HepG2 (cell line): ENCODE measurements at regions of chrX and their contacts with region 1.

Region 1: DNA sequence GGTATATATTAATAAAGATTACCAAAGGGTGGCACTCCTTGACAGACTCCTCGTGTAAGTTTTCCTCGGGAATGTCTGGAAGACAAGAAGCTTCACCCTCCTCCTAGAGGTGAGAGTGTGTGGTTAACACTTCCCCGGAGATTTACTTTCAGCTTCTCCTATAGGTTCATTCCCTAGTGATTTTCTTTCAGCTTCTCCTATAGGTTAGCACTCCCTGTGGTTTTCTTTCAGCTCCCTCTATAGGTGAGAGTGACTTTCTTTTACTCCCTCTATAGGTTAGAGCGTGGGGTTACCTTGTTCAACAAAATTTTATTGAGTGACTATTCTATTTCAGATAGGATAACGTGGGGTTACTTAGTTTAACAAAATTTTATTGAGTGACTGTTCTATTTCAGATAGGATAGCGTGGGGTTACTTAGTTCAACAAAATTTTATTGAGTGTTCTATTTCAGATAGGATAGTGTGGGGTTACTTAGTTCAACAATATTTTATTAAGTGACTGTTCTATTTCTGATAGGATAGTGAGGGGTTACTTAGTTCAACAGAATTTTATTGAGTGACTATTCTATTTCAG is 106.0 kb upstream of the PLAC1 start:
- DNase-seq: peak; percentile 64
- ATAC-seq: peak; percentile 97
- H3K4me3 ChIP-seq: no peak overlapping the region
- H3K27ac ChIP-seq: no peak overlapping the region
- H3K4me1 ChIP-seq: no peaks in the 10 kb centered on the region; the same call in 1 of the 2 replicates
- H3K27me3 ChIP-seq: no peaks in the 10 kb centered on the region
- CTCF ChIP-seq: peak; percentile 29; the same call in 1 of the 2 replicates
- EP300 ChIP-seq: no peak
- POLR2A ChIP-seq: no peak
- RAD21 ChIP-seq: no peak

Region 2: GRCh38 chrX:134423615-134424014 is 340.7 kb before region 1 on chrX:
- CTCF ChIA-PET with region 1: no interaction called
- POLR2A ChIA-PET with region 1: no interaction called
- in situ Hi-C with region 1: no loop called
- intact Hi-C with region 1: loop called (anchors 10 kb)
- DNase-seq: peak; percentile 3
- ATAC-seq: no peak
- H3K4me3 ChIP-seq: no peak overlapping the region
- H3K27ac ChIP-seq: no peak overlapping the region
- H3K4me1 ChIP-seq: no peaks in the 10 kb centered on the region
- H3K27me3 ChIP-seq: no peaks in the 10 kb centered on the region
- CTCF ChIP-seq: peak; percentile 39; the same call in 1 of the 2 replicates
- EP300 ChIP-seq: no peak
- POLR2A ChIP-seq: no peak
- RAD21 ChIP-seq: no peak

Region 3: GRCh38 chrX:134484039-134484438 is 280.3 kb before region 1 on chrX:
- CTCF ChIA-PET with region 1: no interaction called
- POLR2A ChIA-PET with region 1: no interaction called
- in situ Hi-C with region 1: loop called (anchors 10 kb)
- intact Hi-C with region 1: no loop called
- DNase-seq: peak; percentile 15
- ATAC-seq: no peak
- H3K4me3 ChIP-seq: no peak overlapping the region
- H3K27ac ChIP-seq: no peak overlapping the region
- H3K4me1 ChIP-seq: no peaks in the 10 kb centered on the region
- H3K27me3 ChIP-seq: no peaks in the 10 kb centered on the region
- CTCF ChIP-seq: peak; percentile 41
- EP300 ChIP-seq: no peak
- POLR2A ChIP-seq: no peak
- RAD21 ChIP-seq: no peak